Lower leg skin (tissue), 4 donors: ENCODE measurements at regions of chr20 and their contacts with region 1.

Region 1: GRCh38 chr20:20083807-20084206 is 31.5 kb downstream of the CFAP61 start:
- DNase-seq: no peak
- H3K4me3 ChIP-seq: no peak overlapping the region
- CTCF ChIP-seq: no peak
- POLR2A ChIP-seq: no peak

Region 2: DNA sequence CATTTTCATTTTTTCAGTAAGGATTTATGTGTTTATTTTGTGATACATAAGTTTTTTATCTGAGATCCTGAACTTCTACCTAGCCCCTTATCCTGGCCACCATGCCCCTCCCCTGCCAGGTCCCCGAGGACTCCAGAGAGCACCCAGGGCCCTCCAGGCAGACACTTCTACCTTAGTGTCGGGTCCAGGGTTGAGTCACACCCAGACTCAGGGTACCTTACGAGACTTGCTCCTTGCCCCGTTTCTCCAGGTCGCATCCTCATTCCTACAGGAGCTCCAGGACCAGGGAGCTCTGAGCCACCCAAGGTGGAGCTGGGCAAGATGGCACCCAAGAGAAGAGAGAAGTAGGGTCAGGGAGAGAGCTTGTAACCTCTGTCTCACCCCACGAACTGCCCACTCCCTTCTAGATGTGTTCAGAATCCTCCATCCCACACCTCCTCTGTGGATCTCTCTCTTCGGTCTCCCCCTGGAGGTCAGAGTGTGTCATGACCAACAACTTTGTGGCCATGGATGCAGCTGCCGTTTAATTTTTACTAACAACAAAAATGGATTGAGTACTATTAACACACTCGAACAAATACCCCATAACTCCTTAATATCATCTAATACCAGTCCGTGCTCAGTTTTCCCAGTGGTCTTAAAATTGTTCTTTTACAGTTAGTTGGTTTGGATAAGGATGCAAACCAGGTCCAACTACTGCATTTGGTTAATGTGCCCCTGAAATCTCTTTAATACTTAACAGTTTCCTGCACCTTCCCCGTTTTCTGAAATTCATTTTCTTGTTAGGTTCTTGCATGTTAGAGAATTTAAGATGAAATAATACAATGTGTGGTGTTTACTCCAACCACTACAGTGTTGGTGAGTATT is 153.5 kb after region 1 on chr20:
- intact Hi-C with region 1: loop called (anchors 5 kb)
- DNase-seq: peak in 1 of 2 donors; percentile 40
- H3K4me3 ChIP-seq: no peak overlapping the region
- CTCF ChIP-seq: no peak
- POLR2A ChIP-seq: no peak